ENCODE measurements at regions of chr17 and their contacts with region 1.

Region 1: GRCh38 chr17:62931101-62931500 is 34.9 kb upstream of the TANC2 start:
- DNase-seq: no peak
- H3K4me3 ChIP-seq: no peak overlapping the region
- H3K4me3 Mint-ChIP-seq: no peak overlapping the region
- H3K27ac Mint-ChIP-seq: no peak overlapping the region
- H3K4me1 ChIP-seq: no peaks in the 10 kb centered on the region
- H3K4me1 Mint-ChIP-seq: no peaks in the 10 kb centered on the region
- H3K27me3 ChIP-seq: no peaks in the 10 kb centered on the region; the same call in 1 of the 2 replicates
- H3K27me3 Mint-ChIP-seq: peaks cover 23% of the 10 kb centered on the region
- CTCF ChIP-seq: no peak

Region 2: DNA sequence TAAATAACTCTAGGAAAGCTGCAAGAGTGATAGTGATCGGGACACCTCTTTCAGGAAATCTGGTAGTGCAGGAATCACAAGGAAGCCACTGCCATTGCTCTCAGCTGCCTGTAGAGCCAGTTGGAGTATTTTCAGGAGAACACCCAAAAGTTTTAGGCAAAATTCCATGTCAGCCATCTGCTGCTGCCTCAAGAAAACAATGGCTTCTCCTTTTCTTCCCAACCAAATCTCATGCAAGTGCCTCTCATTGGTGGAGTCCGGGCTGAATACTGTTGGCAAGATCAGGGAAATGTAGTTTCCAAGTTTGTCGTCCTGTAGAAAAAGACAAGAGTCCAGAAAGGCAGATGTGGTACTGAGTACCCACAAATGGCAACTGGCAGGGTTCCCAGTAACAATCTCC is 20.0 kb before region 1 on chr17:
- CTCF ChIA-PET with region 1: interaction called, 11 read pairs
- POLR2A ChIA-PET with region 1: no interaction called
- intact Hi-C with region 1: no loop called
- DNase-seq: no peak
- H3K4me3 ChIP-seq: no peak overlapping the region
- H3K4me3 Mint-ChIP-seq: no peak overlapping the region
- H3K27ac Mint-ChIP-seq: no peak overlapping the region
- H3K4me1 ChIP-seq: no peaks in the 10 kb centered on the region
- H3K4me1 Mint-ChIP-seq: no peaks in the 10 kb centered on the region
- H3K27me3 ChIP-seq: no peaks in the 10 kb centered on the region; the same call in 1 of the 2 replicates
- H3K27me3 Mint-ChIP-seq: peaks cover 16% of the 10 kb centered on the region
- CTCF ChIP-seq: no peak

Region 3: GRCh38 chr17:62941356-62941991 is 10.4 kb after region 1 on chr17:
- CTCF ChIA-PET with region 1: no interaction called
- POLR2A ChIA-PET with region 1: no interaction called
- intact Hi-C with region 1: no loop called
- DNase-seq: no peak
- H3K4me3 ChIP-seq: no peak overlapping the region
- H3K4me3 Mint-ChIP-seq: no peak overlapping the region
- H3K27ac Mint-ChIP-seq: no peak overlapping the region
- H3K4me1 ChIP-seq: no peaks in the 10 kb centered on the region
- H3K4me1 Mint-ChIP-seq: no peaks in the 10 kb centered on the region
- H3K27me3 ChIP-seq: no peaks in the 10 kb centered on the region
- H3K27me3 Mint-ChIP-seq: peaks cover 13% of the 10 kb centered on the region
- CTCF ChIP-seq: no peak